Adrenal gland (tissue), 19 donors: ENCODE measurements at regions of chr7 and their contacts with region 1.

Region 1: DNA sequence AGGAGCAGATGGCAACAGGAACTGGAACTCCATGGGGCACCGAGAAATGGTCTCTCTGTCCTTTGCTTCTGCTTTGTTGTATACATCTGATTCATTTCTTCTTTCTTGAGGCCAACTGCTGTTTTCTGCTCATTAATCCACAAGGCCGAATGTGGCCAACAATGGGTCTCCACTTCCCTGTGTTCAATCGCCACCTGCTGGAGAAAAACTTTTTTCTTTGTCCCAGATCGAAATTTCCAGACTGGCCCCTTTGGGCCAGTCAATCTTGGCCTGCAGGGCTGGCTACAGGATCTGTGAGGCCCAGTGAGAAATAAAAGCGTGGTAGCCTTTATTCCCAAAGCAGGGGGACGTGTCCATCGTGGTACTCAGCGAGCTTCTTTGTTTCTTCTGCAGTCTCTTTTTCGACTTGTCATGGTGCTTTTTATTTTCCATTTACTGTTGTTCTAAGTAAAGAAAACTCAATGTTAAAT is 58.8 kb downstream of the PARP12 start:
- DNase-seq: peak in 2 of 7 donors; percentile 16 to 36
- H3K4me3 ChIP-seq: no peak overlapping the region
- H3K27ac ChIP-seq: no peak overlapping the region
- H3K4me1 ChIP-seq: no peaks in the 10 kb centered on the region
- H3K27me3 ChIP-seq: no peaks in the 10 kb centered on the region
- CTCF ChIP-seq: peak in 5 of 6 experiments; percentile 30 to 50 (median 43)
- POLR2A ChIP-seq: no peak

Region 2: DNA sequence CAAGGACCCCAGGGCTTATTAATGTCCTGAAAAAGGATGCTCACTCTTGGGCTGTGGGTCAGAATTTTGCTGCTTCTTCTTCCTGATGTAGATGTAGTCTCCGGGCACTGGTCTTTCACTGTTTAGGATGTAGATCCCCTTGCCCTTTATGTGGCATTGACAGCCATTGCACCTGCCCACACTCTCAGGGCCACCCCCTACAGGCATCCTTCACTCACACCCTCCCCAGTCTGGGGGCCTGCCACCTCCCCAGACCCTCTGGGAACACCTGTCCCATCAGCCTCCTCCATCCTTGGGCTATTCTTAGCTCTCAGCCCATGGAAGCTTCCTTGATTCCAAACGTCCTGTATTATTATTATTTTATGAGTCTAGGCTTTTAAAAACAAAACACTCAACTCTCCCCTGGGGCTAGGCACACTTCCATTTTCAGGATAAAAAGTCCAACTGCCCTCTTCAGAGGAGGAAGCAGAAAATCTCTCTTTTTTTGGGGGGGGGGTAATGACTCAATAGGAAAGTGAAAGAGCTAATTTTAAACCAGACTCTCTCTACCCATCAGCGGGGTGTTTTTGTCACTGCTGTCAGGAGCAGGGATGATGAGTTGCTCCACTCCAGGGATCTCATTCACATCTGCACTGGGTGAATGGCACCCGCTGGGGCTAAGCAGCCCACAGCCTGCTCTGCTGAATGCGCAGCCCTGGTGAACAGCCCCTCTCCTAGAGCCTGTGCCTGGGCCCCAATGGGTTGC is 508.9 kb before region 1 on chr7:
- intact Hi-C with region 1: loop called (anchors 5 to 10 kb)
- DNase-seq: no peak
- H3K4me3 ChIP-seq: no peak overlapping the region
- H3K27ac ChIP-seq: no peak overlapping the region
- H3K4me1 ChIP-seq: peaks cover 0 to 3% of the 10 kb centered on the region in 2 donors
- H3K27me3 ChIP-seq: no peaks in the 10 kb centered on the region
- CTCF ChIP-seq: no peak
- POLR2A ChIP-seq: no peak

Region 3: GRCh38 chr7:139505563-139505962 is 498.4 kb before region 1 on chr7:
- intact Hi-C with region 1: loop called in 1 of 2 experiments (anchors 5 kb)
- DNase-seq: no peak
- H3K4me3 ChIP-seq: no peak overlapping the region
- H3K27ac ChIP-seq: no peak overlapping the region
- H3K4me1 ChIP-seq: no peaks in the 10 kb centered on the region
- H3K27me3 ChIP-seq: no peaks in the 10 kb centered on the region
- CTCF ChIP-seq: no peak
- POLR2A ChIP-seq: no peak

Region 4: DNA sequence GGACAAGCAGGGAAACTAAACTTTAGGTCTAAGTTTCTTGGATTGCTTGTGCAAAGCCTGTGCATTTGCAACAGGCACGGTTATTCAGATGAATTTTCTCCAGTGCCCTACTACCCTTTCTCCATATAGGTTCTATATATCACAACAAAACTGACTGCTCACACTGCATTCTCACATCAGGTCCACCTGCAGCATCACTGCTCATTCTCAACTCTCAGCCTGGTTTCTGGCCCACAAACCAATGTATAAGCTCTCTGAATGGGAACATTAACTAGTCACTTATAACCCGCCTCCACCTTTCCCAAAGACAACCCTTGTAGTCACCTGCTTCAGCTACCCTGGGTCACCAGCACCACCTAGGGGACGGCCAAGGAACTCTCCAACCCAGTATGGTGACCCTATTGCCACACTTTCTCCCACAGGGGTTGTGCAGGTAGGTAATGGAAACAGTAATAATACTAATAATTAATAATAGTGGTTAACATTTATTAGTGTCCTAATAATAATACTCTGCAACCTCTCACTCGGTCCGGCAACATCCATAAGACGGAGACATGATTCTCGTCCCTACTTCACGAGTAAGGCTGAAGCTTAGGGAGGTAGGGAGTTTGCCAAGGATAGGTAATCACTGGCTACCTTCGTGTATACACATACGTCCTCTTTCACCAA is 383.1 kb before region 1 on chr7:
- intact Hi-C with region 1: loop called in 1 of 2 experiments (anchors 5 kb)
- DNase-seq: peak in 4 of 7 donors; percentile 31 to 45 (median 38)
- H3K4me3 ChIP-seq: no peak overlapping the region
- H3K27ac ChIP-seq: no peak overlapping the region
- H3K4me1 ChIP-seq: no peaks in the 10 kb centered on the region
- H3K27me3 ChIP-seq: no peaks in the 10 kb centered on the region
- CTCF ChIP-seq: peak; percentile 29 to 53 (median 48)
- POLR2A ChIP-seq: no peak

Region 5: GRCh38 chr7:139645572-139646523 is 358.1 kb before region 1 on chr7:
- intact Hi-C with region 1: loop called (anchors 5 kb)
- DNase-seq: peak; percentile 81 to 94 (median 87)
- H3K4me3 ChIP-seq: no peak overlapping the region
- H3K27ac ChIP-seq: peak overlapping the region in 1 of 5 donors; percentile 0
- H3K4me1 ChIP-seq: peaks cover 0 to 20% of the 10 kb centered on the region in 2 donors
- H3K27me3 ChIP-seq: no peaks in the 10 kb centered on the region
- CTCF ChIP-seq: peak; percentile 86 to 95 (median 91)
- POLR2A ChIP-seq: no peak

Region 6: GRCh38 chr7:139777948-139778841 is 225.8 kb before region 1 on chr7 and contains the start of gene HIPK2:
- intact Hi-C with region 1: loop called in 1 of 2 experiments (anchors 5 kb)
- DNase-seq: peak; percentile 75 to 83 (median 79)
- H3K4me3 ChIP-seq: peak within 1 kb of the TSS in 3 of 4 donors; percentile 35 to 95 (median 88)
- H3K27ac ChIP-seq: peak within 1 kb of the TSS; percentile 11 to 98 (median 89)
- H3K4me1 ChIP-seq: peaks cover 18 to 23% of the 10 kb centered on the region in 2 donors
- H3K27me3 ChIP-seq: no peaks in the 10 kb centered on the region
- CTCF ChIP-seq: no peak
- POLR2A ChIP-seq: no peak
- total RNA-seq, gene HIPK2: 10.3 to 82.4 (median 55.2) TPM

Region 7: GRCh38 chr7:140702774-140703173 is 698.8 kb after region 1 on chr7:
- intact Hi-C with region 1: no loop called
- DNase-seq: no peak
- H3K4me3 ChIP-seq: no peak overlapping the region
- H3K27ac ChIP-seq: no peak overlapping the region
- H3K4me1 ChIP-seq: peaks cover 7 to 16% of the 10 kb centered on the region in 2 donors
- H3K27me3 ChIP-seq: no peaks in the 10 kb centered on the region
- CTCF ChIP-seq: no peak
- POLR2A ChIP-seq: no peak